ENCODE measurements at regions of chr2 and their contacts with region 1.

Region 1: DNA sequence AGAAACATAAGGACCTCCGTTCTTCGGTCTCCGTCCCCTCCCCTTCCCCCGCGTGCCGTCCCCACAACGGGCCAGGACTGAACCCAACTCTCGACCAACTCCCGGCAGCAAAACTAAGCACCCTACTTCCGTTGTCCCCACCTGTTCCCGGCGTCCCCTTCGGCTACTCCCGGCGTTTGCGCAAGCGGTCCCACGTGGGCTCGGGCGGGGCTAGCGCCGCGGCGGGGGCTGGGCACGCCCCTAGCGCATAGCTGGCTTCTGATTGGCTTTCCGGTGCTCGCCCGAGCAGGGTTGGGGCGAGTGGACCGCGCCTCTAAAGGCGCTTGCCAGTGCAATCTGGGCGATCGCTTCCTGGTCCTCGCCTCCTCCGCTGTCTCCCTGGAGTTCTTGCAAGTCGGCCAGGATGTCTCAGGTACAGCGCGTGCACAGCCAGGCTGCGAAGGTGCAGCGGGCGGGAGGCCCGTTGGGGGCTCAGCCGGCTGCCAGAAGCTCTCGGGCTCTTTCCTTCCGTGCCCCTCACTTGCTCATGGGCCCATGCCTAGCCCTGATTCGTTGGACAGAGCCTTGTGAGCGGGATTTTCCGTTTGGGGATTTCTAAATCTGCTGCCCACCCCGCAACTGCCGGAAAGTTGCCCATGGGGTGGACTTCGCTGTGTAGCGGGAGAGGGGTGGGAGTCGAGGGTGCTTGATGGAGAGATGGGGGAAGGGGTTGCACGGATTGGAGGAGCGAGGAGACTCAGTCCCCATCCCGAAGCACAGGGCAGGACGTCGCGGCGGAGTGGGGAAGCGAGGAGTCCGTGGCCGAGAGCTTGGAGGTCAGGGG is at the starts of genes C2orf76 and DBI:
- DNase-seq: peak; percentile 82 to 97 (median 88)
- ATAC-seq: peak; percentile 93
- H3K4me3 ChIP-seq: peak within 1 kb of the TSS; percentile 94
- H3K4me3 Mint-ChIP-seq: peak within 1 kb of the TSS; percentile 91
- H3K27ac ChIP-seq: peak within 1 kb of the TSS; percentile 59 to 76
- H3K27ac Mint-ChIP-seq: peak within 1 kb of the TSS; percentile 89
- H3K4me1 ChIP-seq: peaks cover 41% of the 10 kb centered on the region
- H3K4me1 Mint-ChIP-seq: peaks cover 59% of the 10 kb centered on the region
- H3K27me3 ChIP-seq: no peaks in the 10 kb centered on the region
- H3K27me3 Mint-ChIP-seq: no peaks in the 10 kb centered on the region
- CTCF ChIP-seq: no peak
- total RNA-seq, gene C2orf76: 2.8 to 4.5 TPM
- total RNA-seq, gene DBI: 23.6 to 27.4 TPM

Region 2: DNA sequence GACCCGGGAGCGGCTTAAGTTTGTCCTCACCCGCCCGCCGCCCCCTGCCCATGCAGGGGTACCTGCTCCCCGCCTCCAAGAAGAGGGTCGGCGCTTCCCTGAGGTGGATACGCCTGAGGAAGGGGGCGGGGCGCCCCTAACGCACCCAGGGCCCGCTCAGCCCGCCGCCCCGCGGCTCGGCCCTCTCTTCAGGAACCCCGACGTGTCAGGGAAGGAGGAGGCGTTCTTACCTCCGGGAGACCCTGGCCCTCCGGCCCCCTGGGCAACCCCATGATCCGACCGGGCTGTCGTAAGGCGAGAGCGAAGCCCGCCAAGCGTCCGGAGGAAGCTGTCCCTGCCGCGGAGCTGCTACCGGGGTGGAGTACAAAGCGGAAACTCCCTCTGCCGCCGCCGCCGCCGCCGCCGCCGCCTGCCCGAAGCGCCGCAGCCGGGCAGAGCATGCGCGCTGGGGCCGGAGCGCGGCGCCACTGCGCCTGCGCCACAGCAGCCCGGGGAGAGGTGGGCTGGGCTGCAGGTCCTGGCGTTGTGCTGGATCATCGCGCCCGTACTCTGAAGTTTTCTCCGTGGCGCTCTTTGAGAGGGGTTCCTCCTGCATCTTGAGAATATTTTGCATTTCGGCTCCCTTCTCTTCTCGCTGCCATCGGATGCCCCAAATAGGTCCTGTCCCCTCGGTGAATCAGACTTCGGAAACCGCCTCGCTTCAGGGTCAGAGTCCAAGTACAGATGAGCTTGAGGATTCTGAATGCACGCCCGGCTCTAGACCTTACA is 1353.0 kb before region 1 on chr2 and contains the start of gene CCDC93:
- CTCF ChIA-PET with region 1: no interaction called
- POLR2A ChIA-PET with region 1: no interaction called
- intact Hi-C with region 1: loop called in 1 of 2 experiments (anchors 5 kb)
- DNase-seq: peak; percentile 73 to 96 (median 84)
- ATAC-seq: peak; percentile 83
- H3K4me3 ChIP-seq: peak within 1 kb of the TSS; percentile 89
- H3K4me3 Mint-ChIP-seq: peak within 1 kb of the TSS; percentile 92
- H3K27ac ChIP-seq: peak within 1 kb of the TSS; percentile 92 to 95
- H3K27ac Mint-ChIP-seq: peak within 1 kb of the TSS; percentile 86
- H3K4me1 ChIP-seq: peaks cover 33% of the 10 kb centered on the region
- H3K4me1 Mint-ChIP-seq: peaks cover 44% of the 10 kb centered on the region
- H3K27me3 ChIP-seq: no peaks in the 10 kb centered on the region
- H3K27me3 Mint-ChIP-seq: no peaks in the 10 kb centered on the region
- CTCF ChIP-seq: no peak
- total RNA-seq, gene CCDC93: 62.2 to 64.5 TPM

Region 3: GRCh38 chr2:118186110-118186857 is 1180.6 kb before region 1 on chr2:
- CTCF ChIA-PET with region 1: no interaction called
- POLR2A ChIA-PET with region 1: no interaction called
- intact Hi-C with region 1: loop called in 1 of 2 experiments (anchors 5 kb)
- DNase-seq: peak; percentile 70 to 96 (median 86)
- ATAC-seq: peak; percentile 94
- H3K4me3 ChIP-seq: peak overlapping the region; percentile 76
- H3K4me3 Mint-ChIP-seq: peak overlapping the region; percentile 96
- H3K27ac ChIP-seq: peak overlapping the region; percentile 69 to 71
- H3K27ac Mint-ChIP-seq: peak overlapping the region; percentile 87
- H3K4me1 ChIP-seq: peaks cover 18% of the 10 kb centered on the region
- H3K4me1 Mint-ChIP-seq: peaks cover 16% of the 10 kb centered on the region
- H3K27me3 ChIP-seq: no peaks in the 10 kb centered on the region
- H3K27me3 Mint-ChIP-seq: no peaks in the 10 kb centered on the region
- CTCF ChIP-seq: no peak

Region 4: GRCh38 chr2:118309946-118310680 is 1056.7 kb before region 1 on chr2:
- CTCF ChIA-PET with region 1: no interaction called
- POLR2A ChIA-PET with region 1: no interaction called
- intact Hi-C with region 1: loop called in 1 of 2 experiments (anchors 5 kb)
- DNase-seq: peak; percentile 43 to 83 (median 58)
- ATAC-seq: peak; percentile 83
- H3K4me3 ChIP-seq: peak overlapping the region; percentile 74
- H3K4me3 Mint-ChIP-seq: peak overlapping the region; percentile 95
- H3K27ac ChIP-seq: peak overlapping the region; percentile 70 to 93
- H3K27ac Mint-ChIP-seq: peak overlapping the region; percentile 98
- H3K4me1 ChIP-seq: peaks cover 19% of the 10 kb centered on the region
- H3K4me1 Mint-ChIP-seq: peaks cover 24% of the 10 kb centered on the region
- H3K27me3 ChIP-seq: no peaks in the 10 kb centered on the region
- H3K27me3 Mint-ChIP-seq: no peaks in the 10 kb centered on the region
- CTCF ChIP-seq: no peak

Region 5: GRCh38 chr2:119290859-119291587 is 75.8 kb before region 1 on chr2:
- CTCF ChIA-PET with region 1: no interaction called
- POLR2A ChIA-PET with region 1: no interaction called
- intact Hi-C with region 1: no loop called
- DNase-seq: peak in 11 of 14 experiments; percentile 51 to 75 (median 66)
- ATAC-seq: no peak
- H3K4me3 ChIP-seq: no peak overlapping the region
- H3K4me3 Mint-ChIP-seq: no peak overlapping the region
- H3K27ac ChIP-seq: no peak overlapping the region
- H3K27ac Mint-ChIP-seq: no peak overlapping the region
- H3K4me1 ChIP-seq: no peaks in the 10 kb centered on the region
- H3K4me1 Mint-ChIP-seq: no peaks in the 10 kb centered on the region
- H3K27me3 ChIP-seq: no peaks in the 10 kb centered on the region
- H3K27me3 Mint-ChIP-seq: no peaks in the 10 kb centered on the region
- CTCF ChIP-seq: no peak

Region 6: GRCh38 chr2:119422360-119423107 is 55.7 kb after region 1 on chr2:
- CTCF ChIA-PET with region 1: no interaction called
- POLR2A ChIA-PET with region 1: no interaction called
- intact Hi-C with region 1: no loop called
- DNase-seq: no peak
- ATAC-seq: no peak
- H3K4me3 ChIP-seq: no peak overlapping the region
- H3K4me3 Mint-ChIP-seq: no peak overlapping the region
- H3K27ac ChIP-seq: no peak overlapping the region
- H3K27ac Mint-ChIP-seq: no peak overlapping the region
- H3K4me1 ChIP-seq: no peaks in the 10 kb centered on the region
- H3K4me1 Mint-ChIP-seq: no peaks in the 10 kb centered on the region
- H3K27me3 ChIP-seq: peaks cover 15% of the 10 kb centered on the region in 2 experiments
- H3K27me3 Mint-ChIP-seq: peaks cover 69% of the 10 kb centered on the region
- CTCF ChIP-seq: no peak

Region 7: DNA sequence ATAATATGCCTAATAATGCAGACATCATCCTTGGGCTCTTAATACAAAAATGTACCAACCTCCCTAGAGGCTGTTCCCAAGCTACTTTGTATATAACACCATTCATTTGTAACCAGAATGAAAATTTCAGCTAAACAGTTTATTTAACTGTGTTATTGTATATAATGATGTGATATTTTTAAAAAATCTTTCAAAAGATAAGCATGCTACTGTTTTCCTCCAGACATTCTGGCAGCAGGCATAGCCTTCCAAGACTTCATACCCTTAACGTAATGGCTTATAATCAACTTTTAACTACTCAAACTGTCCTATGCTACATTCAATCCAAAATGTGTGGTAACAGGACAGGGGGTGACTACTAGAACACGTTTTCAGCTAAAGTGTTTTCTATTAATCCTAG is 198.6 kb after region 1 on chr2:
- CTCF ChIA-PET with region 1: no interaction called
- POLR2A ChIA-PET with region 1: no interaction called
- intact Hi-C with region 1: no loop called
- DNase-seq: no peak
- ATAC-seq: no peak
- H3K4me3 ChIP-seq: no peak overlapping the region
- H3K4me3 Mint-ChIP-seq: no peak overlapping the region
- H3K27ac ChIP-seq: no peak overlapping the region
- H3K27ac Mint-ChIP-seq: no peak overlapping the region
- H3K4me1 ChIP-seq: no peaks in the 10 kb centered on the region
- H3K4me1 Mint-ChIP-seq: no peaks in the 10 kb centered on the region
- H3K27me3 ChIP-seq: no peaks in the 10 kb centered on the region
- H3K27me3 Mint-ChIP-seq: peaks cover 3% of the 10 kb centered on the region
- CTCF ChIP-seq: no peak

Region 8: DNA sequence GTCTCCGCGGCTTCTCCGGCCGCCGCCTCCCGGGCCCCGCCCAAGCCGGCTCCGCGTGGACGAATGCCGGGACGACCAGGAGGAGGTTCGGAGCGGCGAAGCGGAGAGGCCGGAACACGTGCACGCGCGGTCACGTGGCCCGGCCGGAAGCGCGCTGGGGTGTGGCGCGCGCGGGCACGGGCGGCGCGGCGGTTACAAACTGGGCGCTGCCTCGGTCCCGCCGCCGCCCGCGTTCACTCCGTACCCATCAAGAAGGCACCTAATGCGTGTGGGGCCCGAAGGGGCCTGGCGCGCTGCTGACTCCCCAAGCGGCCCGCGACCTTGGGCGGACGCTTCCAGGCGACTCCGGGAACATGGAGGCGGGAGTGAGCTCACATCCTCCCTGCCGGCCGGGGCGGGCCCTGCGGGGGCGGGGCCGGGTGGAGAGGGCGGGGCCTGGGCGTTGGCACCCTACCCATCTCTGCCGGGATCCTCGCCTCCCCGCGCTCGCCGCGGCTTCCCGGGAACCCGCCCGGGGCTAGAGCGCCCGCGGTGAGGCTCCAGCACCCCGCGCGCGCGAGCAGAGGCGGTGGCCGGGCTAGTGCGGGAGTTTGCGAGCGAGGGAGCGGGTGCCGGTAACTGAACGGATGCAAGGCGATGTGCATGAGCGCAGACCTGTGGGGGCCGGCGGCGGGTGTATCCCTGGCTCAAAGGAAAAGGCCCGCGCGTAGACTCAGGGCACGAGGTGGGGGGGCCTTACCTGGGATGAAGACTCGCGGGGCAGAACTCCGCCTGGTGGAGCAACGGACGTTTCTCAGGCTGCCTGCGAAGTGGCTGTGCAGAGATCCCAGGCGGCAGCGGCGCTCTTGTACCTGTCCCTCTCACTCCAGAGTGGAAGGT is 856.4 kb after region 1 on chr2 and contains the start of gene TMEM185B:
- CTCF ChIA-PET with region 1: no interaction called
- POLR2A ChIA-PET with region 1: no interaction called
- intact Hi-C with region 1: loop called in 1 of 2 experiments (anchors 5 kb)
- DNase-seq: peak; percentile 80 to 95 (median 88)
- ATAC-seq: peak; percentile 95
- H3K4me3 ChIP-seq: peak within 1 kb of the TSS; percentile 72
- H3K4me3 Mint-ChIP-seq: peak within 1 kb of the TSS; percentile 87
- H3K27ac ChIP-seq: peak within 1 kb of the TSS; percentile 80 to 85
- H3K27ac Mint-ChIP-seq: peak within 1 kb of the TSS; percentile 87
- H3K4me1 ChIP-seq: peaks cover 37% of the 10 kb centered on the region
- H3K4me1 Mint-ChIP-seq: peaks cover 55% of the 10 kb centered on the region
- H3K27me3 ChIP-seq: no peaks in the 10 kb centered on the region
- H3K27me3 Mint-ChIP-seq: no peaks in the 10 kb centered on the region
- CTCF ChIP-seq: no peak
- total RNA-seq, gene TMEM185B: 17.7 to 19.0 TPM